Dorsolateral prefrontal cortex (tissue), 120 donors: ENCODE measurements at regions of chr2 and their contacts with region 1.

Region 1: GRCh38 chr2:209663150-209663549 is 108.5 kb upstream of the UNC80 start:
- DNase-seq: peak in 3 of 10 donors; percentile 22 to 53 (median 49)
- H3K4me3 ChIP-seq: peak overlapping the region in 54 of 59 donors; percentile 1 to 65 (median 46)
- H3K27ac ChIP-seq: peak overlapping the region in 19 of 59 donors; percentile 5 to 88 (median 21)
- H3K27me3 ChIP-seq: peaks cover 0 to 3% (median 0%) of the 10 kb centered on the region in 45 donors
- CTCF ChIP-seq: no peak

Region 2: DNA sequence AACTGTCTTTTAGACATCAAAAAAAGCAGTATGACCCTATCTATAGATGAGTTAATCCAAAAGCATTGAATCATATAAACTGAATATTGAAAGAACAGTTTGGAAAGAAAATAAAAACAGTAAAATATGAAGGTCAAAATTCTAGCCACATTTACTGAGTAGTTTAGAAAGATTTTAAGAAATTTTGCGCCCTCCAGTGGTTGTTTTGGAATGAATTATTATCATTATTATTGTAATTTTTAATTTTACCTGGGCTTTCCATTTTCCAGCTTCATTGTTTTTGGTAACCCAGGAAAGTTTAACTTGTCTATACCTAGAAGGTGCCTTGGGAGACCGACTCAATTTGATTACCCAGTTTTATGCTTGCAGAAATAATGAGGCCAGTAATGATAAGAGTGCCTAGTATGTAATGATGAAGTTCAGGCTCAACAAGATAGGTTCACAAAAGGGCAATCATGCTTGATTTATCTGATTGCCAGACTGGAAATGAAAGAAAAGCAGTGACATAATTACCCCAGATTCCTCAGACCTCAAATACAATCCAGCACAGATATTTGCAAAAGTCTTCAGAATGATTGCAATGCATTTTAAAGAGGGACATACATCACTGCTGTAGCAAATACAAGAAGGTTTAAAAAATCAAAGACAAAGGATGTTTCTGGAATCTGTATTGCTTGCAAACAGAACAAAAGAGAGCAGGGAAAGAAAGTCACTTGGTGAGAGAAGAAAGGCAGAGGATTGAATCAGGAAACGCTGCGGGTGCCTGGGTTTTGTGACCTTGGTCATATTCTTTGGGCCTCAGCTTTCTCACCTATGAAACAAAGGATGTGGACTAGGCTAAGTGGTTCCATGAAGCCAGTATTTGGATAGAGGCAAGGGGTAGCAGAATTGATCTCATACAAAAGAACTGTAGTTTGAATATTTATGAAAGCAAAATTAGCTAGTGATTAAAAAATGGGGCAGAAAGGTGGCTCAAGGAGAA is 85.5 kb before region 1 on chr2:
- intact Hi-C with region 1: loop called in 1 of 2 experiments (anchors 10 kb)
- DNase-seq: no peak
- H3K4me3 ChIP-seq: peak overlapping the region in 2 of 59 donors; percentile 57 to 65
- H3K27ac ChIP-seq: peak overlapping the region in 37 of 59 donors; percentile 0 to 87 (median 59)
- H3K27me3 ChIP-seq: peaks cover 0 to 6% (median 0%) of the 10 kb centered on the region in 45 donors
- CTCF ChIP-seq: peak; percentile 26 to 73 (median 54)

Region 3: GRCh38 chr2:209687323-209687969 is 24.3 kb after region 1 on chr2:
- intact Hi-C with region 1: loop called in 1 of 2 experiments (anchors 2 kb)
- DNase-seq: no peak
- H3K4me3 ChIP-seq: no peak overlapping the region
- H3K27ac ChIP-seq: peak overlapping the region in 2 of 59 donors; percentile 1 to 21
- H3K27me3 ChIP-seq: no peaks in the 10 kb centered on the region
- CTCF ChIP-seq: no peak